GM18951 (cell line): ENCODE measurements at regions of chr2 and their contacts with region 1.

Region 1: GRCh38 chr2:196068271-196069209 is at the start of gene DNAH7:
- POLR2A ChIP-seq: peak; percentile 41

Region 2: DNA sequence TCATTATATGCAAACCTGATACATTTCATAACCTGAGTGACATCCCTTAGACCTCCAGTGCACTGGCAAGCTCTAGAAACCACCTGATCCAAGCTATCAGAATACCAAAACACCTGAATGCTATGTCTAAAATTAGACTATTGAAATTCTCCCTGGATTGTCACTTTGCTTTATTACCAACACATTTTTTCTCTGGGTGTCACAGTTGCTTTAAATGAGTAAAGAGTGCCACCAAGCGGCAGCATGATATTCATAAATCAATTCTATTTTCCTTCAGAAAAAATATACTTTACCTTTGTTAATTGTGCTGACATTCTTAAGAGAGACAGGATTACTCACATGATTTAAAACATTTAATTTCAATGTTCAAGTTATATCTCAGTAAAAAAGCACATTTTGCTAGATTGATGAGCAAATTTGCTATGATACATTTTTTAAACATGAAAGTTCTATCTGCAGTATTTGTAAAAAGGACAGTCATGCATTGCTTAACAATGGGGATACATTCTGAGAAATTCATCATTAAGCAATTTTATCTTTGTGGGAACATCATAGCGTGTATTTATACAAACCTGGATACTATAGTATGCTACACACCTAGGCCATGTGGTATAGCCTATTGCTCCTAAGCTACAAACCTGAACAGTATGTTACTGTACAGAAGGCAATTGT is 750.0 kb before region 1 on chr2:
- in situ Hi-C with region 1: loop called (anchors 25 kb)
- POLR2A ChIP-seq: no peak

Region 3: DNA sequence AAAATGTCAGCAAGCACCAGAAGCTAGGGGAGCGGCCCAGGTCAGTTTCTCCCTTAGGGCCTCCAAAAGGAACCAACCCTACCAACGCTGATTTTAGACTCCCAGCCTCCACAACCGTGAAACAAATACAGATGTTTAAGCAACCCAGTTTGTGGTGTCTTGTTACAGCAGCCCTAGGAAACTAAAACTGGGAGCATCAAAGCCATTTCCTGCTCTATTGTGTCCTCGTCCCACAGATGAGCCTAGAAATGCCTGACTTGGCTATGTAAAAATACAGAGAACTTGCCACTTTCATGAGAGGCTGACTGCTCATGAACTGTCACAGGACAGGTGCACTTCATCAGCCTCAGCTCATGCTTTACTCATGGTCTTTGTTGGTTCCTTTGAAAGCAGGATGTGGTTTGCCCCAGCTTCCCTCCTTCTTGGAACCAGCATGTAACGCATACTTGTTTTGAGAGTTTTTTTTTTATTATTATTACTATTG is 509.1 kb before region 1 on chr2:
- in situ Hi-C with region 1: loop called (anchors 25 kb)
- POLR2A ChIP-seq: peak; percentile 18

Region 4: GRCh38 chr2:195659982-195660890 is 408.3 kb before region 1 on chr2:
- in situ Hi-C with region 1: loop called (anchors 10 kb)
- POLR2A ChIP-seq: peak; percentile 28